ENCODE measurements at regions of chr9 and their contacts with region 1.

Region 1: DNA sequence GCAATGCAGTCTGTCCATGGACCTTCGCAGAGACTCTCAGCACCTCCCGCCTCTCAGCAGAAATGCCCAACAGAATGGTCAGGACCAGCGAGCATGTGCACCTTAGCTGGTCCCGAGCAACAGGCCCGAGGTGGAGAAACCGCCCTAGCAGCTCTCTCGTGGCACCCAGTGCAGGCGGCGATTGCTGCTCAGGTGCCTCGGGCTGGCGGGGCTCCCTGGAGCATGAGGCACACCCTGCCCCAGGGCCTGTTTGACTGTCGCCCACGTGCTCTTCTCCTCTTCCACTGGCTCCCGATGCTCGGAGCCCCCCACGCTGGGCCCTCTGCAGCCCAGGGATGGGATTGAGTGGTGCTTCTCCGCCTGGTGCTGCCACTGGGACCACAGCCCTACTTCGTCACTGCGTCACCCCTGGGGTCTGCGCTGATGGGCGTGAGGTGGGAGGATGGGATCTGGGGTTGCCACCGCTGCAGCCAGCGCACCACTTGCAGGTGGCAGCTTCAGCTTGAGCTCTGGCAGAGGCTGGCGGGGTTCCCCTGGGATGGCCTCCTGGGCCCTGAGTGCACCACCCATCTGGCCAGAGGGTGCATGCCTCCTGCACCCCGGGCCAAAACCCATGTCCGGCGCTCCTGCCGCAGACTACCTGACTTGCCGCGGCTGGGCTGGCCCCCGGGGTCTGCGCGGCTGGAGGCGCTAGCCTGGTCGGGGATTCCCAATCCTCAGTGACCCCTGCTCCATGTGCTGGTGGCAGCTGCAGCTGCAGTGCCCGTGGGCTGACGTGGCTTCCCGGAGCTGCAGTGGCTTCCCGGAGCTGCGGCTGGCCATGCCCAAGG is 244.2 kb downstream of the FOXD4L6 start:
- DNase-seq: no peak
- ATAC-seq: no peak
- H3K4me3 ChIP-seq: no peak overlapping the region
- H3K27ac ChIP-seq: no peak overlapping the region
- H3K4me1 ChIP-seq: no peaks in the 10 kb centered on the region
- H3K27me3 ChIP-seq: no peaks in the 10 kb centered on the region
- CTCF ChIP-seq: no peak
- EP300 ChIP-seq: no peak
- POLR2A ChIP-seq: peak; percentile 27; the same call in 1 of the 2 replicates
- RAD21 ChIP-seq: no peak

Region 2: DNA sequence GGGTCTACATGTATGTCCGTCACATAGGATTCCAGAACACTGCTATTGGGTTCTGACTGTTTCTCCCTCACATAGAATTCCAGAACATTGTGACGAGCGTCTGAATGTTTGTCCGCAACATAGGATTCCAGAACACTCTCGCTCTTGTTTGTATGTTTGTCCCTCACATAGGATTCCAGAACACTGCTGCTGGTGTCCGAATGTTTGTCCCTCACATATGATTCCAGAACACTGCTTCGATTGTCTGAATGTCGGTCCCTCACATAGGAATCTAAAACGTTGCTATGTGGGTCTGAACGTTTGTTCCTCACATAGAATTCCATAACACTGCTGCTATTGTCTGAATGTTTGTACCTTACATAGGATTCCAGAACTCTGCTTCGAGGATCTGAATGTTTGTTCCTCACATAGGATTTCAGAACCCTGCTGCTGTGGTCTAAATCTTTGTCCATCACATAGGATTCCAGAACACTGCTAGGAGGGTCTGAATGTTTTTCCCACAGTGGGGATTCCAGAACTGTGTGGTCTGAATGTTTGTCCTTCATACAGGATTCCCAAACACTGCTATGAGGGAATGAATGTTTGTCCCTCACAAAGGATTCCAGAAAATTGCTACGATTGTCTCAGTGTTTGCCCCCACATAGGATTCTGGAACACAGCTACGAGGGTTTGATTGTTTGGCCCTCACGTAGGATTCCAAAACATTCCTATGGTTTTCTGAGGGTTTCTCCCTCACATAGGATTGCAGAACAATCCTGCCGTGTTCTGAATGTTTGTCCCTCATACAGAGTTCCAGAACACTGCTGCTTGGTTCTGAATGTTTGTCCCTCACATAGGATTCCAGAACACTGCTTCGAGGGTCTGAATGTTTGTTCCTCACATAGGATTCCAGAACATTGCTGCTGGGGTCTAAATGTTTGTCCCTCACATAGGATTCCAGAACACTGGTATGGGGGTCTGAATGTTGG is 23.7 kb after region 1 on chr9:
- CTCF ChIA-PET with region 1: no interaction called
- POLR2A ChIA-PET with region 1: no interaction called
- RAD21 ChIA-PET with region 1: no interaction called
- SMC1A ChIA-PET with region 1: no interaction called
- in situ Hi-C with region 1: no loop called
- intact Hi-C with region 1: no loop called
- DNase-seq: no peak
- ATAC-seq: no peak
- H3K4me3 ChIP-seq: no peak overlapping the region
- H3K27ac ChIP-seq: no peak overlapping the region
- H3K4me1 ChIP-seq: no peaks in the 10 kb centered on the region
- H3K27me3 ChIP-seq: no peaks in the 10 kb centered on the region
- CTCF ChIP-seq: no peak
- EP300 ChIP-seq: no peak
- POLR2A ChIP-seq: no peak
- RAD21 ChIP-seq: no peak

Region 3: GRCh38 chr9:40935336-40935735 is 51.0 kb after region 1 on chr9:
- CTCF ChIA-PET with region 1: no interaction called
- POLR2A ChIA-PET with region 1: no interaction called
- RAD21 ChIA-PET with region 1: no interaction called
- SMC1A ChIA-PET with region 1: no interaction called
- in situ Hi-C with region 1: no loop called
- intact Hi-C with region 1: loop called (anchors 10 kb)
- DNase-seq: no peak
- ATAC-seq: no peak
- H3K4me3 ChIP-seq: no peak overlapping the region
- H3K27ac ChIP-seq: no peak overlapping the region
- H3K4me1 ChIP-seq: no peaks in the 10 kb centered on the region
- H3K27me3 ChIP-seq: no peaks in the 10 kb centered on the region
- CTCF ChIP-seq: no peak
- EP300 ChIP-seq: no peak
- POLR2A ChIP-seq: no peak
- RAD21 ChIP-seq: no peak